ENCODE measurements at regions of chr20 and their contacts with region 1.

Region 1: DNA sequence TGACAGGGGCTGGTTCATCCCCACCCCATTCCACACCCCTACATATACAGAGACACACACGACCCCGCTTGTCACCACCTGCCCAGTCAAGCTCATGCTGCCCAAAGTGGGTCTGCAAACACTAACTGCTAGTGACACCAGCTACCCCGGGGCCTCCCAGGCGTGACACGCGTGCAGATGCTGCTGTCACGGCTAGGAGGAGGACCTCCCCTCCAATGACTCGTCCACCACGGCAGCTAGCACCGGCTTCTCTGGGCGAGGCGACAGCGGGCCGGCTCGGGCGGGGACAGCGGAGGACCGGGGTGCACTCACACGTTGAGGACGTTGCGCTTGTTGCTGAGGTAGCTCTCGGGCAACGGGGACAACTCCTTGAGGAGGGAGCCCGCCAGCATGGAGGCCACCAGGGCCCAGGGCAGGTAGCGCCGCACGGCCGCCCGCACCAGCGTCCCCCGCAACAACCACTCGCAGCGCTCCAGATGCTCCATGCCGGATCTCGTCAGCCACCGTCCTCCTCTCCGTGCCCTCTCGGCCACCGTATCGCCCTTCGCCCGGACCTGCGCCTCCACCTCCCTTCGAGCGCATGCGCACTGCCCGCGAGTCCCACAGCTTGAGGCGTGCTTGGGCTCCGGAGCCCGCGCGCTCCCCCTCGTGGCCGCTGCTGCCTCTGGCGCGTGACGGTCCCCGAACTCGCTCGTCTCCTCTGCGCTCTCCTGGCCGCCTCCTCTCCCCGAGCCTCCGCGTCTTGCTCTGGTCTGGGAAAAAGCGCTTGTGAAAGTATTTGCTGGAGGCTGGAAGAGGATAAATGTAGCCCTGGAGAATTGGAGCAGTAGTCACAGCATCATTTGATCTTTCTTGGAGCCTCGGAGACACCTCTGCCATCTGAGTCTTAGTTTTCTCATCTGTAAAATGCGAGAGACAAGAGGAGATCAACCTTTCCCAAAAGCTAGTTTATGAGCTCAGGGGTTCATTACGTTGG is at the start of gene FITM2:
- DNase-seq: peak; percentile 100
- total RNA-seq, gene FITM2: 8.0 to 10.6 TPM

Region 2: DNA sequence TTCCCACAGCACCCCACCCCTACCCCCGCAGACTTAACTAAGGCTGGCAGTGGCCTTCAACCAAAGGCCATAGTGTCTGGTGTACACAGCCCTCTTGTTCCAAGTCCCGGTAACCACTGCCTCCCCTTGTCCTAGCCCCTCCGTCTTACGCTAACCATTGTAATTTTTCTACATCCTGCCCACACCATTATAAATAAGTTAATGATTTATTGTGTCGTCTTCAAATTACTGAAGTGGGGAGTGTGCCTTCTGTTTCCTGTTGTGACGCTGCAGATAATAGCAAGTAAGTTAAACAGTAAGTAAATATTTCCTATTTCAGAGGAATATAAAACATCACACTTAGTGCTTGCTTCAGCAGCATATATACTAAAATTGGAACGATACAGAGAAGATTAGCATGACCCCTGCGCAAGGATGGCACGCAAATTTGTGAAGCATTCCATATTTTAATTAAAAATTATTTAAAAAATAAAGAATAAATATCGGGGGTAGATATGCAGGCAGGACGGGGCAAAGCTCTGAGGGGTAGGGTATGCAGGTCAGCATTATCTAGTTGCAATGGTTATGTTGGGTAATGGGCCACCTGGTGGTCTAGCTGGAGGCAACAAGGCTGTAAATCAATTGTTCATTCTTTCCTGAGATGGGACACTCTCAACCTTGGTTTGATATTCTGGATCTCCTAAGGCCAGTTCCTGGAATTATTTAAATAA is 838.1 kb before region 1 on chr20:
- intact Hi-C with region 1: no loop called
- DNase-seq: no peak

Region 3: GRCh38 chr20:44210422-44211176 is 100.4 kb before region 1 on chr20 and contains the start of gene OSER1:
- intact Hi-C with region 1: loop called (anchors 1 to 10 kb)
- DNase-seq: peak; percentile 99
- total RNA-seq, gene OSER1: 24.3 to 27.3 TPM

Measured in posterior vena cava (tissue), 2 donors.